ENCODE measurements at regions of chr5 and their contacts with region 1.

Region 1: GRCh38 chr5:56951946-56952691 is at the start of gene MIER3:
- DNase-seq: peak; percentile 68
- H3K4me3 ChIP-seq: peak within 1 kb of the TSS; percentile 79 to 92 (median 80)
- H3K27ac ChIP-seq: peak within 1 kb of the TSS; percentile 36
- H3K4me1 ChIP-seq: peaks cover 14% of the 10 kb centered on the region
- H3K27me3 ChIP-seq: no peaks in the 10 kb centered on the region
- CTCF ChIP-seq: no peak
- total RNA-seq, gene MIER3: 17.6 to 18.7 TPM

Region 2: DNA sequence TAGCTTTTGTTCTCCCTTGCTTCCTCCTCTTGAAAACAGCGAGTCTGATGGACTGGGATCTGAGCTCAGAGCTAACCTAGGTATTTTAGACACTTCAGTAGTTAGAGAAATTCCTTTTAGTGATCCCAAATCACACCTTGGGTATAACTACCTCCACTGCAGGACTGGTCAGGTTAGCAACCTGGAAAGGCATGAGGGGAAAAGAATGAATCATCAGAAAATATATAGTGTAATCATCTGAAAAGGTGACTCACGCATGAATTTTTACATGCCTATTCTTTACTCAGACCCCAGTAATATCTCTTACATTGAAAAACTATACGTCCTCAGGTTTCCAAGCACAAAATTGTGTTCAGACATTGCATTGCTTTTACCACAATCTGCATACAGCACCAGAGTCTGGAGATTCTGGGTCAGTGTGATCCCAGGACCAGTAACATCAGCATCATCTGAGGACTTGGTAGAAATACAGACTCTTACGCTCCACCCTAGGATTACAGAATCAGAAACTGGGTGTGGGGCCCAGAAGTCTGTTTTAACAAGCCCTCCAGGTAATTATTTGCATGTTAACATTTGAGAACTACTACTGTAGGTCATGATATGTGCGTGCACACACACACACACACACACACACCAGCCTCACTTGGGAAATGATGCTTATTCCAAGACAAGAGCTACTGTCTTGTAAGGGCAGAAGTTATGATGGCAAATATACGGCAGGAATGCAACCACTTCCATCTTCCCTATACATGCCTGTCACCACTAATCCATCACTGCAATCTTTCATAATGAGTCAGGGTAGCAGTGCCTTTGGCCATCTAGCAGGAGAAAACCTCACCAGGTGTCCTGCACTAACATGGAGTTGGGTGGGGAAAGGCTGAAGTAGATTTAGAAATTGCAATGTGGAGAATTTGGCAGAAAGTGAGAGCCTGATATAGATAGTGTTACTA is 408.4 kb before region 1 on chr5:
- CTCF ChIA-PET with region 1: no interaction called
- dilution Hi-C with region 1: no loop called
- in situ Hi-C with region 1: no loop called
- intact Hi-C with region 1: no loop called
- DNase-seq: peak; percentile 87
- H3K4me3 ChIP-seq: no peak overlapping the region
- H3K27ac ChIP-seq: peak overlapping the region; percentile 82
- H3K4me1 ChIP-seq: peaks cover 18% of the 10 kb centered on the region
- H3K27me3 ChIP-seq: no peaks in the 10 kb centered on the region
- CTCF ChIP-seq: no peak

Region 3: GRCh38 chr5:57082441-57083067 is 130.4 kb after region 1 on chr5:
- CTCF ChIA-PET with region 1: interaction called, 3 read pairs
- dilution Hi-C with region 1: no loop called
- in situ Hi-C with region 1: no loop called
- intact Hi-C with region 1: loop called (anchors 2 kb)
- DNase-seq: peak; percentile 35
- H3K4me3 ChIP-seq: no peak overlapping the region
- H3K27ac ChIP-seq: no peak overlapping the region
- H3K4me1 ChIP-seq: no peaks in the 10 kb centered on the region
- H3K27me3 ChIP-seq: no peaks in the 10 kb centered on the region
- CTCF ChIP-seq: peak; percentile 20 to 67

Region 4: DNA sequence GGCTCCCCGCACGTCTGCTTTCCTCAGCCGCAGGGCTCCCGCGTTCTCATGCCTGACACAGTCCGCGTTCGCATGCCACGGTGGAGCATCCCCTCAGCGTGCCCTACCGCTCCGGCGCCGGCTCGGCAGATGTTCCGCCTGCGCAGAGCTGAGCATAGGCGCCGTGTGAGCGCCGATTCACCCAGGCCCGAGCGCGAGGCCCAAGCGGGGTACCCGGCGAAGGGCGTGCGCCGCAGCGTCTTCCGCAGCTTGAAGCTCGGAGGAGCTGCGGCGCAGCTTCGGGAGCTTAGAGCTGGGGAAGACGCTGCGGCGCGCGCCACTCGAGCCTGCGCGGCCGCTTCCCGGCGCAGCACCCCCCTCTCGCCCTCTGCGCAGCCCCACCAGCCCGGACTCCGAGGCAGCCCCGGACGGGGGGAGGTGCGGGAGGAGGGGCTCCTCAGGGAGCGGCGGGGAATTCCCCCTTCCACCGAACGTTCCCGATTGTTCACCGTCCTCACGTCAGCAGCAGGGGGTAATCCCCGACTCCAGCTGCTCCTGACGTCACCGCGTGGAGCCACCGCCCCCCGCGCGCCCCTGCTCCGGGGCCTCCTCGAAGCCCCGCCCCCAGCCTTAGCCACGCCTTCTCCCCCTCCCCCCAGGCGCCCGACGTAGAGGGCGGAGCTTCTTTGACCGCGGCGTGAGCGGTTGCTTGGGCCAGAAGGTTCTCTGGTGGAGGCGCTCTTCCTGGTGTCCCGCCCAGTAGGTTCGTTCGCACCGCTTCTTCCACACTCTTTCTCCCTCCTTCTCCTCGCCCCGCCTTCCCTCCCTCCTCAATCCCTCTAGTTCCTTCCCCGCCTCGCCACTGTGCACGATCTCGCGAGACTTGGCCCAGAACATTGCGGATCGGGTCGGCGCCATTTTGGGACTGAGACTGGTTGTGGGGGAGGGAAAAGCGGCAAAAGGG is 221.3 kb after region 1 on chr5 and contains the start of gene GPBP1:
- CTCF ChIA-PET with region 1: no interaction called
- dilution Hi-C with region 1: no loop called
- in situ Hi-C with region 1: no loop called
- intact Hi-C with region 1: loop called (anchors 1 kb)
- DNase-seq: peak; percentile 99
- H3K4me3 ChIP-seq: peak within 1 kb of the TSS; percentile 94 to 98 (median 96)
- H3K27ac ChIP-seq: peak within 1 kb of the TSS; percentile 99
- H3K4me1 ChIP-seq: peaks cover 23% of the 10 kb centered on the region
- H3K27me3 ChIP-seq: no peaks in the 10 kb centered on the region
- CTCF ChIP-seq: no peak
- total RNA-seq, gene GPBP1: 39.7 to 55.6 TPM